ENCODE measurements at regions of chr1 and their contacts with region 1.

Region 1: GRCh38 chr1:904310-904950 is 19.3 kb upstream of the SAMD11 start:
- H3K4me3 ChIP-seq: peak overlapping the region; percentile 22
- H3K27ac ChIP-seq: peak overlapping the region; percentile 19; the same call in 1 of the 2 replicates
- H3K4me1 ChIP-seq: peaks cover 5% of the 10 kb centered on the region; the same call in 1 of the 2 replicates
- CTCF ChIP-seq: peak; percentile 62; the same call in 1 of the 2 replicates

Region 2: GRCh38 chr1:921011-921837 is 16.8 kb after region 1 on chr1:
- CTCF ChIA-PET with region 1: interaction called, 26 read pairs
- POLR2A ChIA-PET with region 1: interaction called, 15 read pairs
- H3K4me3 ChIP-seq: no peak overlapping the region
- H3K27ac ChIP-seq: peak overlapping the region; percentile 63
- H3K4me1 ChIP-seq: peaks cover 27% of the 10 kb centered on the region
- CTCF ChIP-seq: peak; percentile 86

Region 3: GRCh38 chr1:932776-933602 is 28.6 kb after region 1 on chr1:
- CTCF ChIA-PET with region 1: interaction called, 16 read pairs
- POLR2A ChIA-PET with region 1: interaction called, 4 read pairs
- H3K4me3 ChIP-seq: no peak overlapping the region
- H3K27ac ChIP-seq: peak overlapping the region; percentile 82; the same call in 1 of the 2 replicates
- H3K4me1 ChIP-seq: peaks cover 30% of the 10 kb centered on the region
- CTCF ChIP-seq: no peak

Region 4: DNA sequence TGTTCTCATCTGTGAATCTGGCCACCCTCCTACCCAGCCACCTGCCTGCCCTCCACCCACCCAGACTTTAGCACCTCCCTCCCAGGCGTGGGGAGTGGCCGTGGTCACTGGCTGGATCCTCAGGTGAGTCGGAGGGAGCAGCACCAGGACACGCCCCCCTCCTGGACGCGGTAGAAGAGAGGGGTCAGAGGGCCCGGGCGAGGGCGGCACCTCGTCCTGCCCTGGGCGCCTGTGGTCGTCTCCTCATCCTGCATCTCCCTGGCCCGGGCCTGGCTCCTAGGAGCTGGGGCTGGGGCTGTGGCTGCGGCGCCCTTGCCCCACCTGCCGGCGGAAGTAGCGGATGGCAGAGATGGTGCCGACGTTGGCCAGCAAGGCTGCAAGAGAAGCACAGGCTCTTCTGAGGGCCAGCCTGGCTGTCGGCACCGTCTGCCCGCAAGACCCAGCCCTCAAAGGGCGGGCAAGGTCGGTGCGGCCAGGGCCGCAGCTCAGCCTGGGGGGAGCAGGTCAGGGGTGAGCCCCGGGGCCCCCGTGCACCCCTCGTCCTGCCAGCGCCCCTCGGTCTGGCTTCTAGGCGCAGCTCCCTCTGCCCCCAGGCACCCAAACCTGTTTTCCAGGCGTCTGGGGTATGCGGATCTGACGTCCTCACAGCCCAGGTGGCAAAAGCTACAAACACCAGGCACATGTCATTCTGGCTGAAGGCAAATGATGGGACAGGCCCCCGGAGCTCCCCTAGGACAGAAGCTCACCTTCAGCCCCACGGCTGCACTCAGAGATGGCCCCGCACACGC is 71.7 kb after region 1 on chr1:
- CTCF ChIA-PET with region 1: interaction called, 21 read pairs
- POLR2A ChIA-PET with region 1: no interaction called
- H3K4me3 ChIP-seq: peak overlapping the region; percentile 25
- H3K27ac ChIP-seq: peak overlapping the region; percentile 50; the same call in 1 of the 2 replicates
- H3K4me1 ChIP-seq: peaks cover 3% of the 10 kb centered on the region; the same call in 1 of the 2 replicates
- CTCF ChIP-seq: peak; percentile 96

Region 5: DNA sequence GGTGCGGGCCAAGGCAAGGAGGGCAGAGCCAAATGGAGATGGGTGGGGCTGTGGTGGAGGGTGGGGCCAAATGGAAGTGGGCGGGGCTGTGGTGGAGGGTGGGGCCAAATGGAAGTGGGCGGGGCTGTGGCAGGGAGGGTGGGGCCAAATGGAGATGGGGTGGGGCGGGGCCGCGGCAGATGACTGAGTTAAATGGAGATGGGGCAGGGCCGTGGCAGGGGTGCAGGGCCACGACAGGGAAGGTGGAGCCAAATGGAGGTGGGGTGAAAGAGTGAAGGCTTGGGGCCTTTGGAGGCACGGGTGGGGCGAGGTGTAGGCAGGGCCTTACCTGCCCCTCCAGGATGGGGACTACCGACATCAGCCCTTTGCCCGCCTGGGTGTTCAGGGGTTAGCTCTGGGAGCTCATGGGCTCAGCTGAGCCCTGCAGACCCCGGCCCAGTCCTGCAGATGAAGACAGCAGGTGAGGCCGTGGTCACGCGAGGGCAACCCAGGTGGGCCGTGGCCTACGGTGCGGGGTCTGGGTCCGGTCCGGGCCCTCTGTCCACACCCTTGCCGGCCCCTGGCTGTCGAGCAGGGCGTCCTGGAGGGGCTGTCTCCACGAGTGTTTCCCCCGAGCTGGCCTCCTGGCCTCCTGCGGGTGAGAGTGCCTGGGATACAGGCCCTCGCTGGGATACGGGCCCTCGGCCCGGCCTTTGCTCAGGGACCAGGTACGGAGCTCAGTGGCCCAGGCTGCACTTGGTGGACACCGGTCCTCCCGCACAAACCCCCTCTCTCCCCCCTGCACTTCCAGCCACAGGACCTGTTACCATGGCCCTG is 187.4 kb after region 1 on chr1:
- CTCF ChIA-PET with region 1: no interaction called
- POLR2A ChIA-PET with region 1: no interaction called
- H3K4me3 ChIP-seq: no peak overlapping the region
- H3K27ac ChIP-seq: no peak overlapping the region
- H3K4me1 ChIP-seq: no peaks in the 10 kb centered on the region
- CTCF ChIP-seq: no peak

Region 6: GRCh38 chr1:1157426-1157913 is 253.0 kb after region 1 on chr1:
- CTCF ChIA-PET with region 1: no interaction called
- POLR2A ChIA-PET with region 1: no interaction called
- H3K4me3 ChIP-seq: peak overlapping the region; percentile 15
- H3K27ac ChIP-seq: peak overlapping the region; percentile 84; the same call in 1 of the 2 replicates
- H3K4me1 ChIP-seq: peaks cover 6% of the 10 kb centered on the region; the same call in 1 of the 2 replicates
- CTCF ChIP-seq: no peak